Activated CD8-positive, alpha-beta T cell treated with anti-CD3 and anti-CD28 coated beads for 36 hours (primary cell): ENCODE measurements at regions of chr4 and their contacts with region 1.

Region 1: DNA sequence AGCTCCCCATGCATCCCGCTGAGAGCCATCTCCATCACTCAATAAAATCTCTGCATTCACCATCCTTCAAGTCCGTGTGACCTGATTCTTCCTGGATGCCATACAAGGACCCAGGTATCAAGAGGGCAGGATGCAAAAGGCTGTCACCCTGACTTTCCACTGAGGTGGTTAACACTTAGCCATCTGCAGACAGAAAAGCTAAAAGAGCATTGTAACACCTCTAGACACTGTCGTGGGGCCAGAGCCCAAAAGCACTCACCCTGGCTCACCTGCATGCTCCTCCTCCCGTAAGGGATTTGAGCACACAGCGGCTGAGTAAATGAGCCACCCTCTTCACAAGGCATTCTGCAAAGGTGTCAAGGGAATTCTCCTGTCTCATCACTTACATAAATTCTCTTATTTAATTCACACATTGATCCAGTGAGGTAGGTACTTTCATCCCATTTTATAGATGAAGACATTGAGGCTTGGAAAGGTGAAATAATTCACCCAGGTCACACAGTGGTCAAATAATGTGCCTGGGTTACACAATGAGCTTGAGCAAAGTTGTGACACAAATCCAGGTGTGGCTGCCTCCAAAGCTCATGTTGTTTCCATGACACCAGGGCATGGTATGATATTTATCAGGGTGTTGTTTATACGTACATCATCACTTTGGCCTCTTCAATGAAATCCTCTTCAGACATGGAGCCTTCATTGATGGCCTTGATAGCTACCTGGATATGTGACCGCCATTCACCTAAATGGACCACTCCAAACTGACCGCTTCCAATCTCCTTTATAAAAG is 48.0 kb downstream of the TXK start:
- DNase-seq: no peak
- ATAC-seq: peak; percentile 49
- H3K4me3 Mint-ChIP-seq: no peak overlapping the region
- H3K27ac Mint-ChIP-seq: no peak overlapping the region
- H3K4me1 Mint-ChIP-seq: peaks cover 36% of the 10 kb centered on the region
- H3K27me3 Mint-ChIP-seq: no peaks in the 10 kb centered on the region
- CTCF ChIP-seq: no peak

Region 2: DNA sequence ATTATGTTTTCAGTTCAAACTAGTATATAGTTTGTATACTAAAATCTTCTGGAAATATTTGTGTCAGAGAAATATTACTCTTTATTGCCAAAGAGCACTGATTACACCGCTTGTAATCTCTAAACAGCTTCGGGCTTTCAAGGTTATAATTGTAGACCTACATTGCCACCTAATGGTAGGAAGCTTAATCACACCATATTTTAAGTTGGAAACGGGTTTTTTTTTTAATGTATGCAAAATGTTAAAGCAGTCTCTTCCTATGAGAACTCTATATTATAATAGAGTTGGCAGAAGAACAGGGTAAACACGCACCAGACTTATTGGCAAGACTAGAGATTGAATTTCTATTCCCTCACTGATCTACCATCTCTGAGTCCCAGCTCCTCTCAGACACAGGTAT is 152.2 kb before region 1 on chr4:
- CTCF ChIA-PET with region 1: interaction called, 11 read pairs
- POLR2A ChIA-PET with region 1: no interaction called
- intact Hi-C with region 1: loop called (anchors 5 kb)
- DNase-seq: no peak
- ATAC-seq: peak; percentile 77
- H3K4me3 Mint-ChIP-seq: no peak overlapping the region
- H3K27ac Mint-ChIP-seq: no peak overlapping the region
- H3K4me1 Mint-ChIP-seq: peaks cover 5% of the 10 kb centered on the region
- H3K27me3 Mint-ChIP-seq: no peaks in the 10 kb centered on the region
- CTCF ChIP-seq: peak; percentile 76

Region 3: DNA sequence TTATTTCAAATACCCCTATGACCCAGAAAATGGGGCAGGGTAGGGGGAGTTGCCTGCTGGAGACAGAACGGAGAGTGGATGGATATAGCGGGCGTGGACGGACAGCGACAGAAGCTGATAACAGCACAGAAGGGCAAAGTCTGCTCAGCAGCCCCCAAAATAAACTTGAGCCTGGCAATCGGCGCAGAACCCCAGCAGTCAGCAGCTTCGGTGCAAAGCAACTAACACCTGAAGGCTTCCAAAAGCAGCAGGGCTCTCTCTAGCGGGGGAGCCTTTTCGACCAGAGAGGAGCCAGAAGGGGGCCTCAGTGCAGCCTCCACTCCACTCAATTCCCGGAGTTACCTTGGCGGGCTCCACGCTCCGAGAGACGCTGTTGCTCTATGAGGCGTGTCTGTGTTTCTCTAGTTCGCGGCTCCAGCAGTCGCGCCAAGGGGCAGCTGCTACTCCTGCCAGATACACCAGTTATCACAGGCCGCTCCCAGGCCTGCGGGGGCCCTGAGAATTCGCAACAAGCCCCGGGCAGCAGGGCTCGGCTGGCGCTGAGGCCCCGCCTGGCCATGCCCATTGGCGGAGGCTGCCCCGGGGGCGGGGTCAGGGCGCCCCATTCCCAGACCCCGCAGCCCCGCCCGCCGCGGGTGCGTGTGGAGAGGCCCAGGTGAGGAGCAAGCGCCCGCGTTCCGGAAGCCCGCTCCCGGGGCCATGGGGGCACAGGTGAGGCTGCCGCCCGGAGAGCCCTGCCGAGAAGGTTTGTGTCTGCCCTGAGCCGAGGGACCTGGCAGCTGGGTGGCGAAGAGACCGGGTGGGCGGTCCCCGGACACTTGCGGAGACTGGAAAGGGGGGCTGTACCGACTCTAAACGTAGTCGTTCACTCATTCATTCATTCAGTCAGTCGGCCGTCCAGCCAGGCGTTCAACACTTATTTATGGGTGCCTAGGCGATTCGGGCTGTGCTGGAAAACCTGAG is 69.6 kb before region 1 on chr4 and contains the starts of genes CNGA1 and NIPAL1:
- CTCF ChIA-PET with region 1: interaction called, 16 read pairs
- POLR2A ChIA-PET with region 1: no interaction called
- intact Hi-C with region 1: loop called (anchors 5 kb)
- DNase-seq: peak; percentile 69
- ATAC-seq: peak; percentile 89
- H3K4me3 Mint-ChIP-seq: peak within 1 kb of the TSS; percentile 79
- H3K27ac Mint-ChIP-seq: peak within 1 kb of the TSS; percentile 42
- H3K4me1 Mint-ChIP-seq: peaks cover 23% of the 10 kb centered on the region
- H3K27me3 Mint-ChIP-seq: peaks cover 17% of the 10 kb centered on the region
- CTCF ChIP-seq: no peak
- total RNA-seq, gene CNGA1: 0.50 TPM in 1 of 2 experiments, not detected in the other
- total RNA-seq, gene NIPAL1: 1.1 to 1.9 TPM

Region 4: GRCh38 chr4:48047421-48047844 is 38.6 kb before region 1 on chr4:
- CTCF ChIA-PET with region 1: interaction called, 10 read pairs
- POLR2A ChIA-PET with region 1: no interaction called
- intact Hi-C with region 1: no loop called
- DNase-seq: peak; percentile 97
- ATAC-seq: peak; percentile 85
- H3K4me3 Mint-ChIP-seq: peak overlapping the region; percentile 40
- H3K27ac Mint-ChIP-seq: peak overlapping the region; percentile 26
- H3K4me1 Mint-ChIP-seq: peaks cover 60% of the 10 kb centered on the region
- H3K27me3 Mint-ChIP-seq: peaks cover 11% of the 10 kb centered on the region
- CTCF ChIP-seq: no peak

Region 5: DNA sequence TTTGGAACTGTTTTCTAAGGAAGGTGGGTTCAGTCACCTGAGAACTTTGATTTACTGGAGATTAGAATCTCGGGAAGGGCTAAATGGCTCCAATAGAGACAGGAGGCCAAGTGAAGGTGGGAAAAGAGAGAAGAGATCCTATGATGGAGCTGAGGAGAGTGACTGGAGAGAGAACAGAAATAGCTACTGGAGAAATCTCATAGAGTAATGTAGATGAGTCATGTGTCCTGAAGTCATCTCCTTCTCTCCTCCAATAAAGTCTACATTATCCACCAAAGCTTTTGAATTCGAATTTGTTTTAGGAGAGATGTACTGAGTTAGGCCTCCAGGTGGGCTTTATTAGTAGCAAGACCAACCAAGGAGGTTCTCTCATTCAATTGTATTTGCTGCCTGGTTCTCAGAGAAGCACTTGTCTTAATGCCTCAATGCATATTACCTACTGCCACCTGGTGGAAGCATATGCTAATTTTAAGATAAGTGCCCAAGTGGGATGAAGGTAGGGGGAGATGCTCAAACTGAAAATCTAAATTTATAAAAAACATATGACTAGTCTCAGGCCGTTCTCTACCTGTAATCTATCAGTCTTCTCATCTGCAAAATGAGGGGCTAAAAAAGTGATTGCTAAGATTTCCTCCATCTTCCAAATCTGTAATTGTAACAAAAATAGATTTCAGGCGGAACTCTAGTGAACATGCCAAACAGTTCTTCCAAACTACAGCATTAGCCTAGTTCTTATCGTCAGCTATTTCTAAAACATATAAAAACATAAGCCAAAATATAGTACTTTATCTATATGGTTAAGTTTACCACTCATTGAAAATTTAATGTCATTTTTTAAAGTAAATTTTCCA is 23.6 kb after region 1 on chr4:
- CTCF ChIA-PET with region 1: interaction called, 19 read pairs
- POLR2A ChIA-PET with region 1: interaction called, 3 read pairs
- intact Hi-C with region 1: no loop called
- DNase-seq: no peak
- ATAC-seq: peak; percentile 78
- H3K4me3 Mint-ChIP-seq: no peak overlapping the region
- H3K27ac Mint-ChIP-seq: peak overlapping the region; percentile 65
- H3K4me1 Mint-ChIP-seq: peaks cover 61% of the 10 kb centered on the region
- H3K27me3 Mint-ChIP-seq: no peaks in the 10 kb centered on the region
- CTCF ChIP-seq: peak; percentile 73